ENCODE measurements at regions of chr5 and their contacts with region 1.

Region 1: GRCh38 chr5:31809050-31809870 is 170.3 kb downstream of the PDZD2 start:
- DNase-seq: peak; percentile 52
- ATAC-seq: peak; percentile 99
- H3K4me3 ChIP-seq: no peak overlapping the region
- H3K27ac ChIP-seq: no peak overlapping the region
- H3K4me1 ChIP-seq: no peaks in the 10 kb centered on the region
- H3K27me3 ChIP-seq: peaks cover 0 to 25% of the 10 kb centered on the region in 2 experiments; a peak in 2 of 5 replicates
- CTCF ChIP-seq: peak; percentile 75
- EP300 ChIP-seq: no peak
- POLR2A ChIP-seq: no peak
- RAD21 ChIP-seq: peak; percentile 77

Region 2: DNA sequence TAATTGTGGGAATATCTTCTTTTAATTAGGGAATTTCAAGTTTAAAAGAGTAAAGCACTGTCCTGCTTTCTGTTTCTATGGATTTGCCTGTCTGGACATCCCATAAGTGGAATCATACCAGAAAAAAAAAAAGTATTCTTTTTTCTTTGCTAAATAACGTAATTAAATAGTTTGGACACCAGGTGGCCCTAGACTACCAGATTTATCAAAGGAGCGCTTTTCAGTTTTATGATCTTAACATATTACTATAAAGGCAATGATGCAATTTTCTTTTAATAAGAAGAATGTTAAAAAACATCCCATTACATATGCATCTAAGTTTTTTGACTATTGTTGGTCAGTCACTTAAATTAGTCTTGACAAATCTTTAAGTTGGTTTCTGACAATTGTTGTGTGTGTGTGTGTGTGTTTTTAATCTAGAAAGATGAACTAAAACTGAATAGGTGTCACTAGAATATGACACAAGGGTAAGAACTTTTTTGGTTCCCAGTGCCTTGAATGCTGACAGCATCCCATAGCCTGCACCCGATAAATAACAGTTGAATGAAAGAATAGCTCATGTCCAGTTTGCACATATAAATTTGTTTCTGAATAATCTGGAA is 227.7 kb before region 1 on chr5:
- CTCF ChIA-PET with region 1: interaction called, 18 read pairs
- POLR2A ChIA-PET with region 1: no interaction called
- in situ Hi-C with region 1: loop called (anchors 5 kb)
- intact Hi-C with region 1: loop called (anchors 1 kb)
- DNase-seq: peak; percentile 10
- ATAC-seq: no peak
- H3K4me3 ChIP-seq: no peak overlapping the region
- H3K27ac ChIP-seq: no peak overlapping the region
- H3K4me1 ChIP-seq: no peaks in the 10 kb centered on the region
- H3K27me3 ChIP-seq: peaks cover 2 to 6% of the 10 kb centered on the region in 2 experiments; a peak in 2 of 5 replicates
- CTCF ChIP-seq: peak; percentile 42
- EP300 ChIP-seq: no peak
- POLR2A ChIP-seq: no peak
- RAD21 ChIP-seq: no peak

Region 3: DNA sequence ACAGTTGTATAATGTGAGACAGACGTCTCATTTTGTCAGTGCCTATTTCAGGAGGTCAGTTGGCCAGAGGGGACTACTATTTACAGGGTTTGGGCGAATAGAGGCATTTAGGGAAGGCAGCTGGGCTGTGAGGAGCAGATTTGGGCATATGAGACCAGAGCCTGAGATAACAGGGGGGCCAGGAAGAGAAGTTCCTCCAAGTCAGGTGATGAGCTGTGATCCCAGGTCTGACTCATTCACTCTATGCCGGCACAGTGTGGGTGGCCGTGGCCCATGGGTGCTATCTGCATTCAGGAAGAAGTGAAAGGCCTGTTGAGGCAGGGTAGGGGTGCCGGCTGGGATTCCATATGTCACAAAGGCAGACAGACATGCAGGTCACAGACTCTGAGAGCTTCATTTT is 27.5 kb before region 1 on chr5:
- CTCF ChIA-PET with region 1: no interaction called
- POLR2A ChIA-PET with region 1: no interaction called
- in situ Hi-C with region 1: no loop called
- intact Hi-C with region 1: no loop called
- DNase-seq: no peak
- ATAC-seq: no peak
- H3K4me3 ChIP-seq: no peak overlapping the region
- H3K27ac ChIP-seq: no peak overlapping the region
- H3K4me1 ChIP-seq: no peaks in the 10 kb centered on the region
- H3K27me3 ChIP-seq: peaks cover 0 to 15% of the 10 kb centered on the region in 2 experiments; a peak in 2 of 5 replicates
- CTCF ChIP-seq: no peak
- EP300 ChIP-seq: no peak
- POLR2A ChIP-seq: no peak
- RAD21 ChIP-seq: no peak

Region 4: DNA sequence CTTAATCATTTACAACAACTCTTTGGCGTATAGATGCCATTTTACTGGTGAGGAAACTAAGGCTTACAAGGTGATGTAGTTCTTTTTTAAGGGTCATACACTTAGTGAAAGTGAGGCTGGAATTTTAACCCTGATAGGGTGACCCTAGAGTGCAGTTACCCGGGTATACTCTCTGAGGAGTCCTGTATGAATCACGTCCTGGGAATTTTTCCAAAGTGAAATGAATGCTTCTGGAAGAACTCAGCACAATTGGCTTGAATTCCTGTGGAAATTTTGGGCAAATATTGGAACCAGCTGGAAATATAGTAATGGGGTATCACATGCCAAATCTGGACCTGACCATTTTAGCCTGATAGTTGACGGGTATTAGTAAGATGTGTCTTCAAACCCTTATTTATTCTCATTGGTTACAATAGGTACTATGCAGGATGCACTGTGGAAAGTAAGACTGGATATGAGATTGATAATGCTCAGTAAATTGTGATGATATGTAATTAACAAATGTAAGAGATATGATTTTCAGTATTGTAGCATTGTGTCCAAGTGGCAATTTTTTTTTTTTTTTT is 790.9 kb after region 1 on chr5:
- CTCF ChIA-PET with region 1: no interaction called
- POLR2A ChIA-PET with region 1: no interaction called
- in situ Hi-C with region 1: no loop called
- intact Hi-C with region 1: no loop called
- DNase-seq: no peak
- ATAC-seq: no peak
- H3K4me3 ChIP-seq: no peak overlapping the region
- H3K27ac ChIP-seq: no peak overlapping the region
- H3K4me1 ChIP-seq: peaks cover 23% of the 10 kb centered on the region
- H3K27me3 ChIP-seq: no peaks in the 10 kb centered on the region
- CTCF ChIP-seq: no peak
- EP300 ChIP-seq: no peak
- POLR2A ChIP-seq: no peak
- RAD21 ChIP-seq: no peak

Measured in HepG2 (cell line).